ENCODE measurements at regions of chr17 and their contacts with region 1.

Region 1: GRCh38 chr17:57597531-57598453 is 147.3 kb downstream of the CCDC182 start:
- DNase-seq: peak; percentile 58
- ATAC-seq: no peak
- H3K4me3 Mint-ChIP-seq: no peak overlapping the region
- H3K27ac Mint-ChIP-seq: peak overlapping the region; percentile 98
- H3K4me1 Mint-ChIP-seq: peaks cover 82% of the 10 kb centered on the region
- H3K27me3 Mint-ChIP-seq: no peaks in the 10 kb centered on the region

Region 2: DNA sequence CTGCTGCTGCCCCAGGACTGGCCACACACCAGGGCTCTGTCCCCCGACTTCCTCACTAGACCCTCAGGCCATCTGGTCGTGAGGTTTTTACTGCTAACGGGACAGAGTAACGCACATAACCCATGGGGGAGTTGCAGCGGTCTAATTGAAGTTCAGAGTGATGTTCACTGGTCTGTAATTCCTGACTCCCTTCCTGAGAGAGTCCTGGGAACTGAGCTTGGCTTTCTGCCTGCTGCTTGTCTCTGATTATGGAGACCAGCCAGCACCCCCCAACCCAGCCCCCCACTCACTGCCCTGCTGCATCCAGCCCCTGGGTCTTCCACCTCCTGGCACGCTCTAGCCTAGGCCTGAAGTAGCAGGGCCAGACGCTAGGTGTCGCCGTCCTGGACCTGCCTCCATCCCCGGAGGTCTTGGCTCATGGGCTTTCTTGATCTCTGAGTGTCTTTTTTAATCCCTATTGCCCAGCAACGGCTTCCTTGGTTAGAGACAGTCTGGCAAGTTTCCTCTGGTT is 45.6 kb before region 1 on chr17:
- CTCF ChIA-PET with region 1: interaction called, 16 read pairs
- POLR2A ChIA-PET with region 1: no interaction called
- DNase-seq: peak; percentile 51
- ATAC-seq: peak; percentile 49
- H3K4me3 Mint-ChIP-seq: no peak overlapping the region
- H3K27ac Mint-ChIP-seq: peak overlapping the region; percentile 9
- H3K4me1 Mint-ChIP-seq: peaks cover 33% of the 10 kb centered on the region
- H3K27me3 Mint-ChIP-seq: no peaks in the 10 kb centered on the region

Region 3: GRCh38 chr17:57615836-57616757 is 18.3 kb after region 1 on chr17:
- CTCF ChIA-PET with region 1: interaction called, 10 read pairs
- POLR2A ChIA-PET with region 1: no interaction called
- DNase-seq: no peak
- ATAC-seq: no peak
- H3K4me3 Mint-ChIP-seq: no peak overlapping the region
- H3K27ac Mint-ChIP-seq: no peak overlapping the region
- H3K4me1 Mint-ChIP-seq: peaks cover 29% of the 10 kb centered on the region
- H3K27me3 Mint-ChIP-seq: no peaks in the 10 kb centered on the region

Region 4: GRCh38 chr17:57641761-57642160 is 44.0 kb after region 1 on chr17:
- CTCF ChIA-PET with region 1: interaction called, 26 read pairs
- POLR2A ChIA-PET with region 1: interaction called, 4 read pairs
- DNase-seq: no peak
- ATAC-seq: no peak
- H3K4me3 Mint-ChIP-seq: no peak overlapping the region
- H3K27ac Mint-ChIP-seq: no peak overlapping the region
- H3K4me1 Mint-ChIP-seq: peaks cover 11% of the 10 kb centered on the region
- H3K27me3 Mint-ChIP-seq: no peaks in the 10 kb centered on the region

Region 5: GRCh38 chr17:57739402-57740392 is 141.9 kb after region 1 on chr17:
- CTCF ChIA-PET with region 1: interaction called, 25 read pairs
- POLR2A ChIA-PET with region 1: no interaction called
- DNase-seq: peak; percentile 50
- ATAC-seq: peak; percentile 75
- H3K4me3 Mint-ChIP-seq: no peak overlapping the region
- H3K27ac Mint-ChIP-seq: peak overlapping the region; percentile 4
- H3K4me1 Mint-ChIP-seq: peaks cover 19% of the 10 kb centered on the region
- H3K27me3 Mint-ChIP-seq: peaks cover 7% of the 10 kb centered on the region

Measured in activated CD8-positive, alpha-beta T cell treated with anti-CD3 and anti-CD28 coated beads, Interleukin-2, amount 10 ng/mL, durations not matched to agents 7 days and 5 days (primary cell).